Adrenal gland (tissue), 19 donors: ENCODE measurements at regions of chr2 and their contacts with region 1.

Region 1: GRCh38 chr2:111705711-111706336 is 178.2 kb downstream of the ANAPC1 start:
- DNase-seq: peak in 1 of 7 donors; percentile 23
- H3K4me3 ChIP-seq: no peak overlapping the region
- H3K27ac ChIP-seq: no peak overlapping the region
- H3K4me1 ChIP-seq: peaks cover 0 to 6% of the 10 kb centered on the region in 2 donors
- H3K27me3 ChIP-seq: no peaks in the 10 kb centered on the region
- CTCF ChIP-seq: no peak
- POLR2A ChIP-seq: no peak

Region 2: DNA sequence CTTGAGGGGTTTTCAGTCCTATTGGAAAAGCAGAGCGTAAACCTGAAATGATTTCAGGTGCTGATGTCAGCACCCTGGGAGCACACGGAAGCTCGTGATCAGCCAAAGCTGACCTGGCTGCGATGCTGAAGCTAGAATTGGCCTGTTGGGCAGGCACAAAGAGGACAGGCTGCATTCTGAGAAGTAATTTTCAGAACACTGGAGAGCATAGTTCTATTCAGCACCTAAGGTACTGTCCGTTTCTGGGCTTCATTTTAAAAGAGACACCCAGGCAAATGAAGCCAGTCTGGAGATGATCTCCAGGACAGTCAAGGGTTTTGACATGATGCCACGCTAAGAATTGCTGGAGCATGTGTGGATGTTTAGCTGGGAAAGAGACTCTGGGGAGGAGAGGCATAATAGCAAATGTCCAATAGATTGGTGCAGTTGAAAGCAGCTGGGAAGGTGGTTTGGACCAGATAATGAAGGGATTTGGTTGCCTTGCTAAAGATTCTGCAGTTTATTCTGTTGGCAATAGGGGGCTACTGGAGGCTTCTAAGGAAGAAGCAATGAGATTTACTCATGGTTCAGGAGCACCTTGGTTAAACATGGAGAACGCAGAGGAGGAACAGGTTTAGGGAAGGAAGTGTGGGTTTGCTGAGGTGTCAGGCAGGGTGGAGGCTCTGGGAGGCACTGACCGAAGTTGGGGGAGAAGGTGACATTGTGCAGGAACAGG is 886.9 kb before region 1 on chr2:
- intact Hi-C with region 1: loop called (anchors 10 kb)
- DNase-seq: no peak
- H3K4me3 ChIP-seq: no peak overlapping the region
- H3K27ac ChIP-seq: no peak overlapping the region
- H3K4me1 ChIP-seq: no peaks in the 10 kb centered on the region
- H3K27me3 ChIP-seq: no peaks in the 10 kb centered on the region
- CTCF ChIP-seq: no peak
- POLR2A ChIP-seq: no peak

Region 3: GRCh38 chr2:111116843-111117597 is 588.8 kb before region 1 on chr2:
- intact Hi-C with region 1: loop called in 1 of 2 experiments (anchors 10 kb)
- DNase-seq: peak; percentile 72 to 87 (median 79)
- H3K4me3 ChIP-seq: peak overlapping the region in 2 of 4 donors; percentile 2 to 47
- H3K27ac ChIP-seq: no peak overlapping the region
- H3K4me1 ChIP-seq: peaks cover 5 to 26% of the 10 kb centered on the region in 2 donors
- H3K27me3 ChIP-seq: peaks cover 6% of the 10 kb centered on the region
- CTCF ChIP-seq: peak; percentile 76 to 92 (median 86)
- POLR2A ChIP-seq: no peak

Region 4: GRCh38 chr2:111219285-111219684 is 486.5 kb before region 1 on chr2:
- intact Hi-C with region 1: no loop called
- DNase-seq: no peak
- H3K4me3 ChIP-seq: no peak overlapping the region
- H3K27ac ChIP-seq: no peak overlapping the region
- H3K4me1 ChIP-seq: no peaks in the 10 kb centered on the region
- H3K27me3 ChIP-seq: no peaks in the 10 kb centered on the region
- CTCF ChIP-seq: no peak
- POLR2A ChIP-seq: no peak